MCF 10A (cell line): ENCODE measurements at regions of chr10 and their contacts with region 1.

Region 1: GRCh38 chr10:24724381-24725228 is 918 bp upstream of the ARHGAP21 start:
- DNase-seq: peak; percentile 98
- H3K4me3 Mint-ChIP-seq: no peak overlapping the region
- H3K27ac Mint-ChIP-seq: peak overlapping the region; percentile 54
- H3K4me1 Mint-ChIP-seq: no peaks in the 10 kb centered on the region
- H3K27me3 Mint-ChIP-seq: no peaks in the 10 kb centered on the region
- CTCF ChIP-seq: no peak

Region 2: GRCh38 chr10:24518981-24519597 is 205.5 kb before region 1 on chr10:
- CTCF ChIA-PET with region 1: no interaction called
- POLR2A ChIA-PET with region 1: no interaction called
- intact Hi-C with region 1: no loop called
- DNase-seq: peak; percentile 65
- H3K4me3 Mint-ChIP-seq: no peak overlapping the region
- H3K27ac Mint-ChIP-seq: no peak overlapping the region
- H3K4me1 Mint-ChIP-seq: peaks cover 7% of the 10 kb centered on the region
- H3K27me3 Mint-ChIP-seq: no peaks in the 10 kb centered on the region
- CTCF ChIP-seq: peak; percentile 56

Region 3: DNA sequence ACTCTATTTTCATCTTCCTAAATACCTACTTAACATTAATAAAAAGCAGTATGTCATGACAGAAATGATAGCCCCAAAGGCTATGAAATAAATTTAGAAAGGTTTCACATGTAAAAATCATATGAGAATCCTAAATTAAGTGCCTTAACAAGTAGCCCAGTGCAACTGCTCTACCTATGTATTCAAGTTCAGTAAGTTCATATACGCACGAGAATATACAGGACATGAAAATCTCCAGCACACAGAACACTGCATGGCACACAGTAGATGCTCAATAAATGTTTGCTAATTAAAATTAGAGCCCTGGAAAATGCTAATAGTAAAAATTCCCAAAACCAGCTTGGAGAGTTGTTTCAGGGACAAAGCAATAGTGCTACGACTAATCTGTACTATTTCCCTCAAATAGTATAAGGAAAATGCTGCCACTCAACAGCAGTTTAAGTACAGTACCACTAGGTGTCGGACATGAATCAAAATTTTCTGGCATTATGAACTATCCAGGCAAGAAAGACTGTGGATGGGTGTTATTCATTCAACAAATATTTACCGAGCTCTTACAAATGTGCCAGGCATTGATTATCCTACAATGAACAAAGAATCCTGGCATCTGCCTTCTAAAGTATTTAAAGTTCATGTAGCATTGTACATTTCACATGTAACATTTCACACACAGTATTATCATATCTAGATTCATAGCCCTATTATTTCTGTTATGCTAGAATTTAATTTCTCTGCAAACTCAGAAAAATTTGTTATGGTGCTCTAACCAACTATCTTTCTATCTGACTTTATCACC is 81.8 kb before region 1 on chr10:
- CTCF ChIA-PET with region 1: no interaction called
- POLR2A ChIA-PET with region 1: interaction called, 7 read pairs
- intact Hi-C with region 1: loop called (anchors 1 kb)
- DNase-seq: peak; percentile 77
- H3K4me3 Mint-ChIP-seq: no peak overlapping the region
- H3K27ac Mint-ChIP-seq: no peak overlapping the region
- H3K4me1 Mint-ChIP-seq: peaks cover 6% of the 10 kb centered on the region
- H3K27me3 Mint-ChIP-seq: no peaks in the 10 kb centered on the region
- CTCF ChIP-seq: peak; percentile 68

Region 4: DNA sequence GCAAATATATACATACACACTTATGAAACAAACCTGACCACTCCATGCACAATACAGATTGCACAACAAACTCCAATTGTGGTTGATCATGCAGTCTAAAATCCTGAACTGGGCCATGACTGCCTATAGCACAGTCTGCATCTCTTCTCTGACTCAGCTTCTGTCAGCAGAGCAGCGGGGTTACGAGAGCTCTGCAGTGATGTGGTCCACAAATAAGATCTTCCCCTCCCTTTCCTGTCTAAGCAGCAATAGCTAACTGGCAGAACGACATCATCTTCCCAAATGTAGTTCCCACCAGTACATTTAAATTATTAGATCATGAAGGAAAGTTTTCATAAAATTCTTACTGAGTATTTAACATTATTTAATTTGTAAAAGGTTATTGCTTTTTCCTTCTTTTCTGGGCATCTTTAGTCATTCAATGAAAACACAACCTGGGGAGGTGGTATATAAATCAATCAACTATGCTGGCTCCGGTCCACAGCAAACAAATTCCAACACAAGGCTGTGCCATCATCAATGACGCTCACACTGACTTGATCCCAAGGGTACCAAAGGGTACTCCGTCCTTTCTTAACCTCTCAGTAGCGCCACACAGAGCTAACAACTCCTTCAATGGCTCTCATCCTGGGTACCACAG is 18.0 kb before region 1 on chr10:
- CTCF ChIA-PET with region 1: interaction called, 3 read pairs
- POLR2A ChIA-PET with region 1: interaction called, 19 read pairs
- intact Hi-C with region 1: no loop called
- DNase-seq: peak; percentile 93
- H3K4me3 Mint-ChIP-seq: no peak overlapping the region
- H3K27ac Mint-ChIP-seq: no peak overlapping the region
- H3K4me1 Mint-ChIP-seq: peaks cover 25% of the 10 kb centered on the region
- H3K27me3 Mint-ChIP-seq: no peaks in the 10 kb centered on the region
- CTCF ChIP-seq: no peak

Region 5: GRCh38 chr10:24826019-24826418 is 101.4 kb after region 1 on chr10:
- CTCF ChIA-PET with region 1: interaction called, 7 read pairs
- POLR2A ChIA-PET with region 1: interaction called, 28 read pairs
- intact Hi-C with region 1: loop called (anchors 5 kb)
- DNase-seq: peak; percentile 72
- H3K4me3 Mint-ChIP-seq: peak overlapping the region; percentile 53
- H3K27ac Mint-ChIP-seq: no peak overlapping the region
- H3K4me1 Mint-ChIP-seq: peaks cover 33% of the 10 kb centered on the region
- H3K27me3 Mint-ChIP-seq: no peaks in the 10 kb centered on the region
- CTCF ChIP-seq: no peak

Region 6: GRCh38 chr10:24944512-24945255 is 220.1 kb after region 1 on chr10:
- CTCF ChIA-PET with region 1: interaction called, 3 read pairs
- POLR2A ChIA-PET with region 1: interaction called, 11 read pairs
- intact Hi-C with region 1: loop called (anchors 1 kb)
- DNase-seq: peak; percentile 90
- H3K4me3 Mint-ChIP-seq: no peak overlapping the region
- H3K27ac Mint-ChIP-seq: no peak overlapping the region
- H3K4me1 Mint-ChIP-seq: peaks cover 7% of the 10 kb centered on the region
- H3K27me3 Mint-ChIP-seq: no peaks in the 10 kb centered on the region
- CTCF ChIP-seq: peak; percentile 42

Region 7: DNA sequence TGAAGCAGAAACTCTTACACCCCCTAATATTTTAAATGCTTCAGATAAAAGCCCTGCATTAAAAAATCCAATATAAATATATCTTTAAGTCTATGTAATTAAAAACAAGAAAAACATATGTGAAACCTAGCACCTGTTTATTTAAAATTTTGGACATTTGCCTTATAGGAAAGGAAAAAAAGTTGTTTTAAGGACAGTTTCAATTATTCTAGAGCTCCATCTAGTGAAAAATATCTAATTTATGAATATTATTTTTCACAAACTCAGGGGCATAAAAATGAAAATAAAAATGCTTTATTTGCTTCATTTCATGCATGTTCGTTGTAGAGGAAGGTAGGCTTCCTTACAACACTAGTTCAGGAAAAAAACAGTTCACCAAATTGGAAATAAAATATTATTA is 265.3 kb after region 1 on chr10:
- CTCF ChIA-PET with region 1: interaction called, 3 read pairs
- POLR2A ChIA-PET with region 1: interaction called, 3 read pairs
- intact Hi-C with region 1: loop called (anchors 2 kb)
- DNase-seq: peak; percentile 4
- H3K4me3 Mint-ChIP-seq: no peak overlapping the region
- H3K27ac Mint-ChIP-seq: no peak overlapping the region
- H3K4me1 Mint-ChIP-seq: no peaks in the 10 kb centered on the region
- H3K27me3 Mint-ChIP-seq: no peaks in the 10 kb centered on the region
- CTCF ChIP-seq: peak; percentile 37

Region 8: GRCh38 chr10:25059764-25060389 is 335.3 kb after region 1 on chr10:
- CTCF ChIA-PET with region 1: interaction called, 3 read pairs
- POLR2A ChIA-PET with region 1: interaction called, 6 read pairs
- intact Hi-C with region 1: loop called (anchors 5 kb)
- DNase-seq: peak; percentile 94
- H3K4me3 Mint-ChIP-seq: peak overlapping the region; percentile 53
- H3K27ac Mint-ChIP-seq: peak overlapping the region; percentile 78
- H3K4me1 Mint-ChIP-seq: peaks cover 35% of the 10 kb centered on the region
- H3K27me3 Mint-ChIP-seq: no peaks in the 10 kb centered on the region
- CTCF ChIP-seq: no peak